G401 (cell line): ENCODE measurements at regions of chr6 and their contacts with region 1.

Region 1: GRCh38 chr6:26097268-26097875 is 10.1 kb downstream of the HFE start:
- DNase-seq: peak; percentile 83

Region 2: GRCh38 chr6:26017632-26017966 is 79.8 kb before region 1 on chr6:
- in situ Hi-C with region 1: no loop called
- DNase-seq: no peak

Region 3: GRCh38 chr6:26064619-26065257 is 32.6 kb before region 1 on chr6:
- in situ Hi-C with region 1: loop called (anchors 5 kb)
- DNase-seq: peak; percentile 48

Region 4: DNA sequence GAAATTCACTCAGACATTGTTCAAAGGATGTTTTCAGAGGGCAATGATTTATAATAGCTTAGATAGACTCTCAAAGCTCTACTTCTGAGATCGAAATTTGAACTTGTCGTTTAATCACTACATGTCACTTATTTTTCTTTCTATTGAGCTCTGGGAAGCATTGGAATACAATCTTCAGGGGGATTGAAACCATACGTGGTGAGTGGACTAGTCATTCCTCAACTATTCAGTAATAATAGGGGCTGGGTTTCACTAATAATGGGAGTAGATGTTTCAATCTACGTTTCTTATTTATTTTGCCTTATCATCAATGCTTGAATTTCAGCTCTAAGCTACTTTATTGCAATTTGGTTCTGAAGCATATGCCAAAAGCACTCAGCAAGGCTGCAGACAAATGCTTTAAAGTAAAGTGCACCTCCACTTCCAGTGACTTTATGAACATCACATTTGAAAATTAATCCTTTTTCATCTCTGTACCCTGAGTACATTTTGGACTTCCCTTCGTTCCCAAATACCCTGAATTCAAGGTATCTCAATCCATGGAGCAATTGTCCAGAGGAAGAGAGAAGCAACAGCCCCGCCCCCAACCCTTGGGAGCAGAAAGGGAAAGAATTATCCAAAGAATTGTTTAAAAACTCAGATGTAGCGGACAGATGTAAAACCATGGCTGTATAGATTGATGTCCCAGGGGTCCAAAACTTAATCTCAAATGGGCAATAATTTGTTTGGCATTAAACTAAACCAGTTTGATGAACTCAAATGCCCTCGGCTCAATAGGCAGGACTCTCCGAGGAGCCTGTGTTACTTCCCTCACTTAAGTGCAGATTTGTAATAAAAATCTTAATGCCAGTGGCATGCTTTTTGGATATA is 57.9 kb after region 1 on chr6:
- in situ Hi-C with region 1: no loop called
- DNase-seq: peak; percentile 78

Region 5: DNA sequence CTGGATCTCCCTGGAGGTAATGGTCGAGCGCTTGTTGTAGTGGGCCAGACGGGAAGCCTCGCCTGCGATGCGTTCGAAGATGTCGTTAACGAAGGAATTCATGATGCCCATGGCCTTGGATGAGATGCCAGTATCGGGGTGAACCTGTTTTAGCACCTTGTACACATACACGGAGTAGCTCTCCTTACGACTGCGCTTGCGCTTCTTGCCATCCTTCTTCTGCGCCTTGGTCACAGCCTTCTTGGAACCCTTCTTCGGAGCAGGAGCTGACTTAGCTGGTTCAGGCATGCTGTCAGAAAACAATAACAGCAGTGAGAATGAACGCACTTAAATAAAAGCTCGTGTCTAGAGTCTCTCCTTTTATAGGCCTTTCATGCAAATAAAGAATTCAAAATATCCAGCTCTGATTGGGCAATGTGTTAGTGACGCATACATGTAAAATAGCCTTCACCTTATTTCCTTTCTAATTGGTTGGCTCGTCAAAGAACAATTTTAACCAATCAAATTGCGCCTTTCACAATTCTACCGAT is 119.0 kb after region 1 on chr6:
- in situ Hi-C with region 1: no loop called
- DNase-seq: peak; percentile 100